HepG2 (cell line): ENCODE measurements at regions of chr19 and their contacts with region 1.

Region 1: DNA sequence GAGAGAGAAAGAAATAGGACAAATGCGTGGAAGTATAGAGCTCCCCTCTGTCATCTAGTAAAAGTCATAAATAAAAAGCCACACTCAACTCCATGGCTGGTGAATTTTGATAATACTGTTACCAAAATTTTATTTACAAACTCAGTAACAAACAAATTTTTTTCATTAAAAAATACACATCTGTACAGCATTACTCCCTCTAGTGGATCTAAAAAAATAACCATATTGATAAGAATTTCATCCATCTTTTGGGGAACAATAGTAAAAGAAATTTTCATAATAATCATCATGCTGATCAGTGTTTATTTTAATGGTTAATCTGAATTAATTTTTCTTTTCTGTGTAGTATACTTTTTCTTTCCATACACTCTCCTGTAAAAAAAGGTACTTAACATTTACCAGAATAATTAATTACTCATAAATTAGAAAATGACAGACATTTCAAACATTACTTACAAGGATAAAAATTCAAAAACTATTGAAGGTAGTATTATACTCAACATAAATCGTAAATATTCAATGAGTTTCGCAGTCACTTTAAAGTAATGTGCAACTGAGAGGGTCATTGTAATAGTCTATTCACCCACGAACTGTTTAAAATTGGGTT is 173.5 kb upstream of the LSM14A start:
- DNase-seq: no peak
- ATAC-seq: no peak
- H3K4me3 ChIP-seq: no peak overlapping the region
- H3K27ac ChIP-seq: no peak overlapping the region
- H3K4me1 ChIP-seq: no peaks in the 10 kb centered on the region
- H3K27me3 ChIP-seq: peaks cover 0 to 16% of the 10 kb centered on the region in 2 experiments; a peak in 2 of 5 replicates
- CTCF ChIP-seq: no peak
- EP300 ChIP-seq: no peak
- POLR2A ChIP-seq: no peak
- RAD21 ChIP-seq: no peak

Region 2: DNA sequence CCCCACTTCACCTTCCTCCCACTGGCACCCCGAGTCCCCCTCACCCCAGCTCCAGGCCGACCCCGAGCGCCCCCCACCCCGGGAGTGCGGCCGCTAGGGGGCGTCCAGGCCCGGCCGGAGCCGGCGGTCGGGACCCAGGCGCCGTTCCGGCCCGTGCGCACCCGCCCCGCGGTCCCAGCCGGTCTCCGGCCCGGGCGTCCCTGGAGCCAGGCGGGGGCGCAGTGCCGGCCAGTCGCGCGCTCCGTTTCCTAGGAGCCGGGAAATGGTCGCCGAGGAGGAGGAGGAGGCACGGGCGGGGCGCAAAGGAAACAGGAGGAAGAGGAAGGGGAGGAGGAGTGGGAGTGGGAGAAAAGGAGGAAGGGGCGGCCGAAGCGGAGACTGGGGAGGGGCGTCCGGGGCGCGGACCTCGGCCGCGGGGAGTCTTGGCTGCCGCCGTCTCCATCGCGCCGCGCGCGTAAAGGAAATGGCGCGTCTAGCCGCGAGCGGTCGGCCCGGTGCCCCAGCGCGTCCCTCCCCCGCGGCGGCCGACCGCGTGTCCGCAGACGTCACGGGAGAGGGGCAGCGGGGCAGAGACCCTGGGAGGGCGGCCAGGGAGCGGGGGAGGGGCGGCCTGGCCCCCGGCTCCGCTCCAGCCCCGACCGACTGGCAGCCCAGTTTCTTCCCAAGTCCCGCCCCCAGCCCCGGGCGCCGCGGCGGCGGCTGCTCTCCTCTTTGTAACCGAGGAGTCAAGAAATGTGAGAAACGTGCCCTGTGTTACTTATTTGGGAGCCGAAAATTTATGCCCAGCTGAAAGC is 203.3 kb before region 1 on chr19:
- CTCF ChIA-PET with region 1: interaction called, 20 read pairs
- POLR2A ChIA-PET with region 1: no interaction called
- in situ Hi-C with region 1: no loop called
- intact Hi-C with region 1: loop called (anchors 5 kb)
- DNase-seq: peak; percentile 66
- ATAC-seq: peak; percentile 86
- H3K4me3 ChIP-seq: peak overlapping the region; percentile 82 to 89 (median 83)
- H3K27ac ChIP-seq: peak overlapping the region; percentile 92
- H3K4me1 ChIP-seq: peaks cover 8% of the 10 kb centered on the region
- H3K27me3 ChIP-seq: peaks cover 1 to 18% of the 10 kb centered on the region in 2 experiments; a peak in 2 of 5 replicates
- CTCF ChIP-seq: peak; percentile 78
- EP300 ChIP-seq: peak in 1 of 2 experiments; percentile 54; a peak in 1 of 4 replicates
- POLR2A ChIP-seq: peak; percentile 73 to 82
- RAD21 ChIP-seq: peak; percentile 84

Region 3: DNA sequence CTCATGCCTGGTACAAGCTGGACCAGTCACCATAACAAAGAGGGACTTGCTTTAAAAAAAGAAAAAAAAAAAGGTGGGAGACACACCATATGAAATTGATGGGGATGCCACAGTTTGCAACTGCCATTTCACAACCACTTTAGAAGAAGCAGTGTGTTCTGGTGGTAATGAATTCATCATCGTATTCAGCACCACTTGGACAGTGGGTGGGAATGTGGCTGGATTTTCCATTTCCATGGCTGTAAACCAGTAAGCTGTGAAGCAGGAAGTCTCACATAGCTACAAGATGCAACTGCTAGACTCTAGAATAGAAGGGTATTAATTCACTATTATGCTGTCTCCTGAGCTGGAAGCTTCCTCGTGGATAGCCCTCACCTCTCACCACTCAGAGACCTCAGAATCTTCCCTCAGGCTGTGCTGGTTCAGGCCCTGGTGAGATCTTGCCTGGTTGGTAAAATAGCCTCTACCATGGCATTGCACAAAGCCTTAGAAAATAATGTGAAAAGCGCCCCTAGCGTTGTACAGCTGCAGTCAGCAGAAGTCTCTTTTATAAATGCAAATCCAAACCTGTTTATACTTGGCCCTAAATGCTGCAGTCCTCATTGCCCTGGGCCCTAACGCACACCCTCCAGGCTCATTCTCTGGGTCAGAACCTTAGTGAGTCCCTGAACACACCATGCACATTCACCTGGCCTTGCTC is 51.4 kb before region 1 on chr19:
- CTCF ChIA-PET with region 1: no interaction called
- POLR2A ChIA-PET with region 1: no interaction called
- in situ Hi-C with region 1: no loop called
- intact Hi-C with region 1: loop called (anchors 10 kb)
- DNase-seq: no peak
- ATAC-seq: peak; percentile 47
- H3K4me3 ChIP-seq: no peak overlapping the region
- H3K27ac ChIP-seq: no peak overlapping the region
- H3K4me1 ChIP-seq: peaks cover 21% of the 10 kb centered on the region
- H3K27me3 ChIP-seq: peaks cover 0 to 28% of the 10 kb centered on the region in 2 experiments; a peak in 4 of 5 replicates
- CTCF ChIP-seq: peak; percentile 13; the same call in 1 of the 2 replicates
- EP300 ChIP-seq: no peak
- POLR2A ChIP-seq: no peak
- RAD21 ChIP-seq: no peak

Region 4: DNA sequence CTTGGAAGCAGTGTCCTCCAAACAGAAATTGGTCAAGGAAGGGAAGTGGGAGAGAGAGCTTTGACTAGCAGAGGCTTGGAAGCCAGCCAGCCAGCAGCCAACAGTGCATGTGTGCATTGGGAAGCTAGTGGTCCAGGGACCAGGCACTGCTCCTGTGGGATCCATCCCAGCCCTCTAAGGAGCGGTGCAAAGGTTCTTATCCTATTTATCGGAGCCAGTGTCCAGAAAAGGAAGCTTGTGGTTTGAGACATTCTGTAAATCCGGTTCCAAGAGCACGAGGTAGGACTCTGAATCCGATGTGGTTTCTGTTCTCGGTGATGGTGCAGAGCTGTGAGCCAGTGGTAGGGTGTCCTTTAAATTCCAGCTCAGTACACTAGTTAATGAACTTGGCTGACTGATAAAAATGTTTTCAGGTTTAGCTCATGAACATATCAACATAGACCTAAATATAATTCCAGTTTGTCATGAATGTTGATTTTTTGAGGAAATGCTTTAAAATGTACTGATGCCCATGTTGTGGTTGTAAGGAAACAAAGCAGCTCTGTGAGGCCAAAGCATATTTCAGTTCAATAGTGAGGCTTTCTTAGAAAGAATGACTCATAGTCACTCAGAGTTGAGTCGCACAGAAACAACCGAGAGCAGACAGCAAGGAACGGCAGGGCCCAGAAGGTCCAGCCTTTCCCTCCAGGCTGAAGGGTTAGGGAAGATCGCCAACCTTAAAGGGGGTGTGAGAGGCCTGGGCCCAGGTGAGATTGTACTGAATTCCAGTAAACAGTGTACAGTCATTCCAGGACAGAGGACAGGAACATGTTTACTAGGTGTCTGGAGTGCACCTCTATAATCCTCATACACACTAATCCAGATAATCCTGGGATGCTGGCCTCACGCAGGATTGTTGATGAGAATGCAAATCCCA is 234.0 kb after region 1 on chr19:
- CTCF ChIA-PET with region 1: no interaction called
- POLR2A ChIA-PET with region 1: no interaction called
- in situ Hi-C with region 1: no loop called
- intact Hi-C with region 1: no loop called
- DNase-seq: peak; percentile 56
- ATAC-seq: peak; percentile 49
- H3K4me3 ChIP-seq: no peak overlapping the region
- H3K27ac ChIP-seq: no peak overlapping the region
- H3K4me1 ChIP-seq: peaks cover 12% of the 10 kb centered on the region
- H3K27me3 ChIP-seq: no peaks in the 10 kb centered on the region
- CTCF ChIP-seq: no peak
- EP300 ChIP-seq: no peak
- POLR2A ChIP-seq: no peak
- RAD21 ChIP-seq: no peak